Activated CD8-positive, alpha-beta T cell treated with anti-CD3 and anti-CD28 coated beads, Interleukin-2, amount 10 ng/mL, durations not matched to agents 7 days and 5 days (primary cell): ENCODE measurements at regions of chr17 and their contacts with region 1.

Region 1: GRCh38 chr17:58006924-58007780 is at the start of gene SRSF1:
- DNase-seq: peak; percentile 98
- ATAC-seq: peak; percentile 90
- H3K4me3 Mint-ChIP-seq: peak within 1 kb of the TSS; percentile 99
- H3K27ac Mint-ChIP-seq: peak within 1 kb of the TSS; percentile 99
- H3K4me1 Mint-ChIP-seq: peaks cover 52% of the 10 kb centered on the region
- H3K27me3 Mint-ChIP-seq: no peaks in the 10 kb centered on the region
- total RNA-seq, gene SRSF1: 382 to 383 TPM

Region 2: DNA sequence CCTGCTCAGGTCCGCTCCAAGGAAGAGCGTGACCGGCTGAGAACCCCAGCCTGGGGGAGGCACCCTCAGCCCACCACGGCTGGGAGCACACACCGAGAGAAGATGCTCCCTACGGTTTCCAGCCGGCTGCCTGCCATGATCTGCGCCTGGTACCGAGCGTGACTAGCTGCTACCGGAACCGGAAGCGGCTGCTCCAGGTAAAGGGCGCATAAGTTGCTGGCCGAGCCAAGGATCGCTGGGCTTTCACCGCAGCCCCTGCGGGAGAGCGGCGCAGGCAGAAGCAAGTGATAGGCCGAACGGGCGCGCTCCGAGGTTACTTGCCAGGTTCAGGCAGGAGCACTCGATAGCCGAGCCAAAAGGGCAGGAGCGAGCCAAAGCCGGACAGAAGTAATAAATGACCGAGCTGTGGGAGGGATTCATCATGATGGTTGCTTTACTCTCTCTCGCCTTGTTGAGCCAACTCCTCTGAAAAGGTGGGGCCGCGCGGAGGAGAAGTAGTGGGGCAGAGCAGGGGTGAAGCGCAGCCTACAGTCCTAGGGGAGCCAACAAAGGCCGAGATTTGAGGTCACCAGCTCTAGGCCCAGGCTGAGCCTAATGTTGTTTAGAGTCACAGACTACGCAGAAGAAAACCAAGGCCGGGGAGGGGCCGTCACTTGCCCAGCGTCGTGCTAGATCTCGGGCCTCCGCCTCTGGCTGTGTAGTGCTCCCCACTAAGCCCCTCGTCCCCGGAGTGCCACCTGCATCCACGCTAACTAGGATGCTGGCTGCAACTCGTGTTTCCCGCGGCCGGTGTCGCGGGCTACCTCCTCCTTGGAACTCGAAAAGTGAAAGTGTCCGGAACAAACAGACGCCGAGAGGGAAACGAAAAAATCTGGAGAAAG is 157.0 kb before region 1 on chr17 and contains the start of gene MRPS23:
- CTCF ChIA-PET with region 1: interaction called, 4 read pairs
- POLR2A ChIA-PET with region 1: interaction called, 34 read pairs
- DNase-seq: peak; percentile 98
- ATAC-seq: peak; percentile 93
- H3K4me3 Mint-ChIP-seq: peak within 1 kb of the TSS; percentile 97
- H3K27ac Mint-ChIP-seq: peak within 1 kb of the TSS; percentile 99
- H3K4me1 Mint-ChIP-seq: peaks cover 40% of the 10 kb centered on the region
- H3K27me3 Mint-ChIP-seq: no peaks in the 10 kb centered on the region
- total RNA-seq, gene MRPS23: 46.3 to 48.7 TPM

Region 3: DNA sequence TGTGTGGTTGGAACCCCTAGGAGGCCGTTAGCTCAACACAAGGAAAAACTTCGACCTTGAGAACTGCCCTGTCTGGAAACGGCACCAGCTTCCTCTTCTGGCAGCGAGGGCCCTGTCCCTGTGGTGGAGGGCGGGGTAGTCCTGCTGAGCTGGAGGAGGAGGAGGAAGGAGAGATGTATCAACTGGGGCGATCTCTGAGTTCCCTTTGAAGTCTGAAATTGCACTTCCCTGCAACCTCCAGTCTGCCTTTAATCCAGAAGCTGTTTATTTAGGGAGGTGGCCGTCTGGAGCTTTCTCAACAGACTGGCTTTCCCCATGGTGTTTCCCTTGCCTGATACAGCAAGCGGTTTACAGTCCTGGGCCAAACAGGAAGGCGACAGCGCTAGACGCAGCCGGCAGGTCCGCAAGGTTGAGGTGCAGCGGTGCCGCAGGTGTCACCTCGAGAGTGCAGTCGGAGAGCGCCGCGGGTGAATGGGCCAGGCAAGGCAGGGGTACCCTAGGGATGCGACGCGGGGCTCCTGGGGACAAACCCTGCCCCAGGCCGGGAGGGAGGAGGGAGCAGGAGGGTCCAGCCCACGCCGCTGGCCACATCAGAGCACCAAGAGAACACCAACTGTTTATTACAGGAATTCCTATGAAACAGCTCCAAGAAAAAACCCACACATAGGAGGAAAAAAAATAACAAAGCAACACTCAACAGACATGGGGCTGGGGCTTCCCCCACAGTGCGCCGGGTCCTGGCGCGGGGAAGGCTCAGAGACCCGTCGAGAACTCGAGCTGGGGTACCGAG is 146.0 kb before region 1 on chr17:
- CTCF ChIA-PET with region 1: interaction called, 138 read pairs
- POLR2A ChIA-PET with region 1: interaction called, 23 read pairs
- DNase-seq: peak; percentile 55
- ATAC-seq: peak; percentile 80
- H3K4me3 Mint-ChIP-seq: peak overlapping the region; percentile 56
- H3K27ac Mint-ChIP-seq: peak overlapping the region; percentile 15
- H3K4me1 Mint-ChIP-seq: peaks cover 11% of the 10 kb centered on the region
- H3K27me3 Mint-ChIP-seq: peaks cover 43% of the 10 kb centered on the region

Region 4: GRCh38 chr17:57987580-57988421 is 19.4 kb before region 1 on chr17 and contains the start of gene VEZF1:
- CTCF ChIA-PET with region 1: interaction called, 71 read pairs
- POLR2A ChIA-PET with region 1: interaction called, 18 read pairs
- DNase-seq: peak; percentile 82
- ATAC-seq: peak; percentile 73
- H3K4me3 Mint-ChIP-seq: peak within 1 kb of the TSS; percentile 91
- H3K27ac Mint-ChIP-seq: peak within 1 kb of the TSS; percentile 92
- H3K4me1 Mint-ChIP-seq: peaks cover 66% of the 10 kb centered on the region
- H3K27me3 Mint-ChIP-seq: no peaks in the 10 kb centered on the region
- total RNA-seq, gene VEZF1: 37.5 to 37.6 TPM

Region 5: GRCh38 chr17:58082870-58083490 is 75.8 kb after region 1 on chr17 and contains the start of gene DYNLL2:
- CTCF ChIA-PET with region 1: interaction called, 4 read pairs
- POLR2A ChIA-PET with region 1: interaction called, 37 read pairs
- DNase-seq: peak; percentile 93
- ATAC-seq: peak; percentile 82
- H3K4me3 Mint-ChIP-seq: peak within 1 kb of the TSS; percentile 85
- H3K27ac Mint-ChIP-seq: peak within 1 kb of the TSS; percentile 81
- H3K4me1 Mint-ChIP-seq: peaks cover 39% of the 10 kb centered on the region
- H3K27me3 Mint-ChIP-seq: peaks cover 27% of the 10 kb centered on the region
- total RNA-seq, gene DYNLL2: 30.9 to 31.7 TPM

Region 6: GRCh38 chr17:58156839-58157803 is 150.0 kb after region 1 on chr17:
- CTCF ChIA-PET with region 1: interaction called, 6 read pairs
- POLR2A ChIA-PET with region 1: interaction called, 11 read pairs
- DNase-seq: peak; percentile 70
- ATAC-seq: peak; percentile 77
- H3K4me3 Mint-ChIP-seq: peak overlapping the region; percentile 79
- H3K27ac Mint-ChIP-seq: peak overlapping the region; percentile 81
- H3K4me1 Mint-ChIP-seq: peaks cover 52% of the 10 kb centered on the region
- H3K27me3 Mint-ChIP-seq: peaks cover 7% of the 10 kb centered on the region